ENCODE measurements at regions of chr1 and their contacts with region 1.

Region 1: GRCh38 chr1:212477014-212477679 is 44.4 kb downstream of the NENF start:
- DNase-seq: peak; percentile 96
- H3K4me3 ChIP-seq: no peak overlapping the region
- H3K27ac ChIP-seq: no peak overlapping the region
- H3K4me1 ChIP-seq: peaks cover 0 to 17% (median 8%) of the 10 kb centered on the region in 4 donors
- H3K27me3 ChIP-seq: no peaks in the 10 kb centered on the region
- CTCF ChIP-seq: peak; percentile 84 to 94 (median 89)
- EP300 ChIP-seq: no peak
- POLR2A ChIP-seq: no peak

Region 2: GRCh38 chr1:212440419-212440818 is 36.7 kb before region 1 on chr1:
- intact Hi-C with region 1: no loop called
- DNase-seq: no peak
- H3K4me3 ChIP-seq: no peak overlapping the region
- H3K27ac ChIP-seq: no peak overlapping the region
- H3K4me1 ChIP-seq: peaks cover 0 to 16% (median 10%) of the 10 kb centered on the region in 4 donors
- H3K27me3 ChIP-seq: no peaks in the 10 kb centered on the region
- CTCF ChIP-seq: no peak
- EP300 ChIP-seq: no peak
- POLR2A ChIP-seq: no peak

Region 3: DNA sequence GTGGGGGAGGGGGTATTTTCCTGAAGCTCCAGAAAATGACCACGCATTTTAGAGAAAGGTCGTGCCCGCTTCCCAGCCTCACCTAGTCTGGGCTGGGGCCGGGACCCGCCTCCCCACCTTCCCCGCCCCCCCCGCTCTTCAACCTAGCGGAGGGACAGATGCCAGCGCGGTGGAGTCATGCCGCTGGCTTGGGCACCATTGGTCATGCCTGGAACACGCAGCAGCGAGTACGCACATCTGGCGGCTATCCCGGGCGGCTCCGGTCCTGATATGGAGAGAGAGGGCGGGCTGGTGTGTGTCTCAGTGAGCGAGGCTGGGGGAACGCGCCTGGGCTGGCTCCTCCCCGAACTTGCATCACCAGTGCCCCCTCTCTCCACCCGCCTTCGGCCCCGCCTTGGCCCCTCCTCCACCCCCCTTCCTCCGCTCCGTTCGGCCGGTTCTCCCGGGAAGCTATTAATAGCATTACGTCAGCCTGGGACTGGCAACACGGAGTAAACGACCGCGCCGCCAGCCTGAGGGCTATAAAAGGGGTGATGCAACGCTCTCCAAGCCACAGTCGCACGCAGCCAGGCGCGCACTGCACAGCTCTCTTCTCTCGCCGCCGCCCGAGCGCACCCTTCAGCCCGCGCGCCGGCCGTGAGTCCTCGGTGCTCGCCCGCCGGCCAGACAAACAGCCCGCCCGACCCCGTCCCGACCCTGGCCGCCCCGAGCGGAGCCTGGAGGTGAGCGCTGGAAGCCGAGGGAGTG is 131.2 kb after region 1 on chr1 and contains the start of gene ATF3:
- intact Hi-C with region 1: loop called (anchors 5 kb)
- DNase-seq: peak; percentile 100
- H3K4me3 ChIP-seq: peak within 1 kb of the TSS; percentile 69 to 90 (median 83)
- H3K27ac ChIP-seq: peak within 1 kb of the TSS; percentile 98 to 100 (median 99)
- H3K4me1 ChIP-seq: peaks cover 40 to 56% (median 48%) of the 10 kb centered on the region in 4 donors
- H3K27me3 ChIP-seq: peaks cover 0 to 33% (median 20%) of the 10 kb centered on the region in 4 donors
- CTCF ChIP-seq: no peak
- EP300 ChIP-seq: peak; percentile 17
- POLR2A ChIP-seq: peak; percentile 99
- total RNA-seq, gene ATF3: 2.9 to 29.7 (median 3.7) TPM

Region 4: GRCh38 chr1:212630158-212630900 is 153.2 kb after region 1 on chr1:
- intact Hi-C with region 1: loop called (anchors 2 kb)
- DNase-seq: no peak
- H3K4me3 ChIP-seq: no peak overlapping the region
- H3K27ac ChIP-seq: no peak overlapping the region
- H3K4me1 ChIP-seq: peaks cover 0 to 11% (median 7%) of the 10 kb centered on the region in 4 donors
- H3K27me3 ChIP-seq: no peaks in the 10 kb centered on the region
- CTCF ChIP-seq: peak; percentile 61 to 92 (median 79)
- EP300 ChIP-seq: no peak
- POLR2A ChIP-seq: no peak

Region 5: DNA sequence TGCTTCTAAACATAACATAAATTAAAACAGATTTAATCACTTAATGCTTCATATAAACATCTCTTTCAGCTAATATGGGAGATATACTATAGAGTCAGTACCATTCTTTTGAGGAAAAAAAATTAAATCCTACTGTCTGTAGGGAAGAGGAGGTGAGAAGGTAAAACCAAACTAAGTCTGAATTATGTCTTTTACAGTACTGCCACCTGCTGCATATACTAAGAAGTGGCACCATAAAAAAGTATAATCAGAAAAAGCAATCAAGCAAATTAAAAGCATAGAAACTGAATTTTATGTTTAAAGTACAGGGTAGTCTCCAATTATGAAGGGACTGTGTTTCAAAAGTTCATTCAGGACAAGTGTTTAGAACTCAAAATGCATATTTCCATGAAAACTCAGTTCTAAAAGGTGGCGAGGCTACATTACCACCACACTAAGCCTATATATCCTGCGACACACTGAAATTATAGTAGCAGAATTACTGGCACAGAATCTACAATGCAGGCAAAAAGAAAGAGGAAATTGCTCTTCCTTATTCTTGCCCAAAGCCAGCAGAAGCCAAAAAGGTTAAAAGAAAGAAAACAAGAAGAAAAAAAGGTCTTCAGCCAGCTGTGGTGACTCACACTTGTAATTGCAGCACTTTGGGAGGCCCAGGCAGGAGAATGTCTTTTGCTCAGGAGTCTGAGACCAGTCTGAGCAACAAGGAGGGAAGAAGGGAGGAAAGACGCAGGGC is 305.4 kb after region 1 on chr1:
- intact Hi-C with region 1: loop called (anchors 5 kb)
- DNase-seq: no peak
- H3K4me3 ChIP-seq: no peak overlapping the region
- H3K27ac ChIP-seq: no peak overlapping the region
- H3K4me1 ChIP-seq: no peaks in the 10 kb centered on the region
- H3K27me3 ChIP-seq: no peaks in the 10 kb centered on the region
- CTCF ChIP-seq: peak; percentile 49 to 63 (median 50)
- EP300 ChIP-seq: no peak
- POLR2A ChIP-seq: no peak